ENCODE measurements at regions of chr9 and their contacts with region 1.

Region 1: GRCh38 chr9:6584881-6585597 is 60.5 kb downstream of the GLDC start:
- DNase-seq: no peak
- ATAC-seq: no peak
- H3K4me3 ChIP-seq: no peak overlapping the region
- H3K27ac ChIP-seq: no peak overlapping the region
- H3K4me1 ChIP-seq: no peaks in the 10 kb centered on the region
- H3K27me3 ChIP-seq: no peaks in the 10 kb centered on the region
- CTCF ChIP-seq: peak; percentile 23; the same call in 1 of the 2 replicates

Region 2: GRCh38 chr9:6566409-6567139 is 18.5 kb before region 1 on chr9:
- CTCF ChIA-PET with region 1: no interaction called
- POLR2A ChIA-PET with region 1: no interaction called
- in situ Hi-C with region 1: no loop called
- intact Hi-C with region 1: no loop called
- DNase-seq: peak; percentile 59
- ATAC-seq: peak; percentile 96
- H3K4me3 ChIP-seq: no peak overlapping the region
- H3K27ac ChIP-seq: peak overlapping the region; percentile 68
- H3K4me1 ChIP-seq: peaks cover 11% of the 10 kb centered on the region
- H3K27me3 ChIP-seq: no peaks in the 10 kb centered on the region
- CTCF ChIP-seq: no peak

Region 3: GRCh38 chr9:6667633-6668280 is 82.7 kb after region 1 on chr9:
- CTCF ChIA-PET with region 1: no interaction called
- POLR2A ChIA-PET with region 1: no interaction called
- in situ Hi-C with region 1: no loop called
- intact Hi-C with region 1: loop called (anchors 5 kb)
- DNase-seq: no peak
- ATAC-seq: no peak
- H3K4me3 ChIP-seq: no peak overlapping the region
- H3K27ac ChIP-seq: no peak overlapping the region
- H3K4me1 ChIP-seq: no peaks in the 10 kb centered on the region
- H3K27me3 ChIP-seq: no peaks in the 10 kb centered on the region
- CTCF ChIP-seq: peak; percentile 52

Region 4: DNA sequence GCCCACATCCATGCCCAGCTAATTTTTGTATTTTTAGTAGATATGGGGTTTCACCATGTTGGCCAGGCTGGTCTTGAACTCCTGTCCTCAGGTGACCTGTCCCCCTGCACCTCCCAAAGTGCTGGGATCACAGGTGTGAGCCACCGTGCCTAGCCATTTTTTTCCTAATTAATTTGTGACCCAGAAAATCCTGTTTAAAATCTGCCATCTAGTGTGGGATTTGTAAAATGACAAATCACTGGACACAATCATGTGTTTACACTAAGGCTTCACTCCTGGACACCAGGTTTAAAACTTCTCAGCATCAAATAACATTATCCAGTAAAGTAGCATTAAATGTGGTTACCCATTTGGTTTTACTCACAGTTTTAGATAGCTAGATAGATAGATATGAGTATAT is 154.2 kb after region 1 on chr9:
- CTCF ChIA-PET with region 1: no interaction called
- POLR2A ChIA-PET with region 1: no interaction called
- in situ Hi-C with region 1: no loop called
- intact Hi-C with region 1: loop called (anchors 5 kb)
- DNase-seq: no peak
- ATAC-seq: no peak
- H3K4me3 ChIP-seq: no peak overlapping the region
- H3K27ac ChIP-seq: no peak overlapping the region
- H3K4me1 ChIP-seq: no peaks in the 10 kb centered on the region
- H3K27me3 ChIP-seq: no peaks in the 10 kb centered on the region
- CTCF ChIP-seq: peak; percentile 33; the same call in 1 of the 2 replicates